ENCODE measurements at regions of chr5 and their contacts with region 1.

Region 1: GRCh38 chr5:132103332-132103951 is 29.9 kb downstream of the CSF2 start:
- DNase-seq: peak; percentile 82
- ATAC-seq: peak; percentile 57
- H3K4me3 Mint-ChIP-seq: peak overlapping the region; percentile 64
- H3K27ac Mint-ChIP-seq: peak overlapping the region; percentile 98
- H3K4me1 Mint-ChIP-seq: peaks cover 73% of the 10 kb centered on the region
- H3K27me3 Mint-ChIP-seq: no peaks in the 10 kb centered on the region

Region 2: GRCh38 chr5:131252824-131253171 is 850.6 kb before region 1 on chr5:
- CTCF ChIA-PET with region 1: no interaction called
- POLR2A ChIA-PET with region 1: no interaction called
- intact Hi-C with region 1: loop called in 1 of 2 experiments (anchors 5 kb)
- DNase-seq: peak; percentile 87
- ATAC-seq: peak; percentile 70
- H3K4me3 Mint-ChIP-seq: peak overlapping the region; percentile 84
- H3K27ac Mint-ChIP-seq: peak overlapping the region; percentile 98
- H3K4me1 Mint-ChIP-seq: peaks cover 69% of the 10 kb centered on the region
- H3K27me3 Mint-ChIP-seq: no peaks in the 10 kb centered on the region

Region 3: DNA sequence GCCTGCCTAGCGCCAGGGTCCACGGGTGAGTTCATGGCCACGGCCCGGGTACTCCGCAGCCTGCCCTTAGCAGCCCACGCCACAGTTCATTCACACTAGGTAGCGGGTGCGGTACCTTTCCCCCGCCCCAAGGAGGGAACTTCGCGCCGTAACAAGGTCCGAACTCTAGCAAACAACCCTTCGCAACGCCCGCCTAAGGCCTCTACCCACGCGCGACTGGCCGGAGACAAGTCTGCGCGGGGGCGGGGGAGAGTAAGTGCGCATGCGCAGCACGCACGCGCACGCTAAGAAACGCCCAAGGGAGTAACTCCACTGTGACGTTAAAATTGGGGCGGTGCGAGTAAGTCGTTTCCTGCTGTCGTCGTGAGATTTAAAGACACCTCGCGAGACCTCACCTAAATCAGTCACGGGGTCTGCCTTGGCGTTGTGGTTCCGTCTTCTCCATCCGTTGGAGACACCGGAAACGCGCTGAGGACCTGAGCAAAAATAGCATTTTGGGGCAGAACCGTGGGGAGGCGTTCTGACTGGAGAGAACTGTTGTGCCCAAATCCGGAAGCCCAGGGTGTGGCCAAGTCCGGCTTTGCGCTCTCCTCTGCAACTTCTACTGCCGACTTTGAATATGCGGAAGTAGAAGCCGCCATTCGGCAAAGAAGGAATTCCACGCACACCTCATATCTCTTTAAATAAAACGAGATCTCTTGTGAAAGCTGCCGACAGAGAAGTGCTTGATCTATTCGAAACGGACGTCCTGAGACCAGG is 468.3 kb before region 1 on chr5 and contains the start of gene RAPGEF6:
- CTCF ChIA-PET with region 1: no interaction called
- POLR2A ChIA-PET with region 1: no interaction called
- intact Hi-C with region 1: loop called in 1 of 2 experiments (anchors 2 kb)
- DNase-seq: peak; percentile 98
- ATAC-seq: peak; percentile 89
- H3K4me3 Mint-ChIP-seq: no peak within 1 kb of the TSS
- H3K27ac Mint-ChIP-seq: peak within 1 kb of the TSS; percentile 93
- H3K4me1 Mint-ChIP-seq: peaks cover 22% of the 10 kb centered on the region
- H3K27me3 Mint-ChIP-seq: no peaks in the 10 kb centered on the region
- total RNA-seq, gene RAPGEF6: 26.5 to 30.5 TPM

Region 4: DNA sequence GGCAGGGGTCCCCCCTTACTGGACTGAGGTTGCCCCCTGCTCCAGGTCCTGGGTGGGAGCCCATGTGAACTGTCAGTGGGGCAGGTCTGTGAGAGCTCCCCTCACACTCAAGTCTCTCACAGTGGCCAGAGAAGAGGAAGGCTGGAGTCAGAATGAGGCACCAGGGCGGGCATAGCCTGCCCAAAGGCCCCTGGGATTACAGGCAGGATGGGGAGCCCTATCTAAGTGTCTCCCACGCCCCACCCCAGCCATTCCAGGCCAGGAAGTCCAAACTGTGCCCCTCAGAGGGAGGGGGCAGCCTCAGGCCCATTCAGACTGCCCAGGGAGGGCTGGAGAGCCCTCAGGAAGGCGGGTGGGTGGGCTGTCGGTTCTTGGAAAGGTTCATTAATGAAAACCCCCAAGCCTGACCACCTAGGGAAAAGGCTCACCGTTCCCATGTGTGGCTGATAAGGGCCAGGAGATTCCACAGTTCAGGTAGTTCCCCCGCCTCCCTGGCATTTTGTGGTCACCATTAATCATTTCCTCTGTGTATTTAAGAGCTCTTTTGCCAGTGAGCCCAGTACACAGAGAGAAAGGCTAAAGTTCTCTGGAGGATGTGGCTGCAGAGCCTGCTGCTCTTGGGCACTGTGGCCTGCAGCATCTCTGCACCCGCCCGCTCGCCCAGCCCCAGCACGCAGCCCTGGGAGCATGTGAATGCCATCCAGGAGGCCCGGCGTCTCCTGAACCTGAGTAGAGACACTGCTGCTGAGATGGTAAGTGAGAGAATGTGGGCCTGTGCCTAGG is 30.0 kb before region 1 on chr5 and contains the start of gene CSF2:
- CTCF ChIA-PET with region 1: interaction called, 5 read pairs
- POLR2A ChIA-PET with region 1: interaction called, 3 read pairs
- intact Hi-C with region 1: loop called (anchors 1 kb)
- DNase-seq: peak; percentile 46
- ATAC-seq: peak; percentile 28
- H3K4me3 Mint-ChIP-seq: peak within 1 kb of the TSS; percentile 61
- H3K27ac Mint-ChIP-seq: peak within 1 kb of the TSS; percentile 33
- H3K4me1 Mint-ChIP-seq: peaks cover 43% of the 10 kb centered on the region
- H3K27me3 Mint-ChIP-seq: no peaks in the 10 kb centered on the region
- total RNA-seq, gene CSF2: 52.6 to 59.5 TPM

Region 5: DNA sequence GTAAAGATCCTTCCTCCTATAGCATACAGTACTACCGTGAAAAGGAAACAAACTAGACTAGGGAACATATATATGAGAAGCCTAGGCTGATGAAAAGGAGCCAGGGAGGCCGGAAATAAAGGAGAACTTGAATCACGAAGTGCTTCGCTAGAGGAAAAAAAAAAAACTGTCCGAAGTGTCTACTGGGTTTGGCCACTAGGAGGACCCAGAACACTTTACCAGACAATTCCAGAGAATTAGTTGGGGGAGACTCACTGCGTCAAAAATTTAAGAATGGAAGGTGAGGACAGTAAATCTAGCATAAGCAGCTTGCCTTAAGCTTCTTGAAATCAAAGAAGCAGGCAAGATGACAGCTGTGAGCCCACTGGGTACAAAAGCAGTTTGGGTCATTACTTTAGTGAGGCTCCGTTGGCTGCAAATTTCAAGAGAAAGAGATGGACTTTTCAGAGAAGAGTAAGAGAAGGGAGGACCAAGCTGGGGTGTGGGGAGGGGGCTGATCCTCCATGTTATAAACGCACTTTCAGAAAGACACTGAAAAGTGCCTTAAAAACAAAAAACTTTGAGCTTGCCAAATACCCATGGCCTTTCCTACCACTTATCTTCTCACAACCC is 76.8 kb after region 1 on chr5:
- CTCF ChIA-PET with region 1: interaction called, 8 read pairs
- POLR2A ChIA-PET with region 1: no interaction called
- intact Hi-C with region 1: loop called (anchors 1 kb)
- DNase-seq: peak; percentile 19
- ATAC-seq: peak; percentile 38
- H3K4me3 Mint-ChIP-seq: no peak overlapping the region
- H3K27ac Mint-ChIP-seq: peak overlapping the region; percentile 73
- H3K4me1 Mint-ChIP-seq: peaks cover 36% of the 10 kb centered on the region
- H3K27me3 Mint-ChIP-seq: no peaks in the 10 kb centered on the region

Region 6: DNA sequence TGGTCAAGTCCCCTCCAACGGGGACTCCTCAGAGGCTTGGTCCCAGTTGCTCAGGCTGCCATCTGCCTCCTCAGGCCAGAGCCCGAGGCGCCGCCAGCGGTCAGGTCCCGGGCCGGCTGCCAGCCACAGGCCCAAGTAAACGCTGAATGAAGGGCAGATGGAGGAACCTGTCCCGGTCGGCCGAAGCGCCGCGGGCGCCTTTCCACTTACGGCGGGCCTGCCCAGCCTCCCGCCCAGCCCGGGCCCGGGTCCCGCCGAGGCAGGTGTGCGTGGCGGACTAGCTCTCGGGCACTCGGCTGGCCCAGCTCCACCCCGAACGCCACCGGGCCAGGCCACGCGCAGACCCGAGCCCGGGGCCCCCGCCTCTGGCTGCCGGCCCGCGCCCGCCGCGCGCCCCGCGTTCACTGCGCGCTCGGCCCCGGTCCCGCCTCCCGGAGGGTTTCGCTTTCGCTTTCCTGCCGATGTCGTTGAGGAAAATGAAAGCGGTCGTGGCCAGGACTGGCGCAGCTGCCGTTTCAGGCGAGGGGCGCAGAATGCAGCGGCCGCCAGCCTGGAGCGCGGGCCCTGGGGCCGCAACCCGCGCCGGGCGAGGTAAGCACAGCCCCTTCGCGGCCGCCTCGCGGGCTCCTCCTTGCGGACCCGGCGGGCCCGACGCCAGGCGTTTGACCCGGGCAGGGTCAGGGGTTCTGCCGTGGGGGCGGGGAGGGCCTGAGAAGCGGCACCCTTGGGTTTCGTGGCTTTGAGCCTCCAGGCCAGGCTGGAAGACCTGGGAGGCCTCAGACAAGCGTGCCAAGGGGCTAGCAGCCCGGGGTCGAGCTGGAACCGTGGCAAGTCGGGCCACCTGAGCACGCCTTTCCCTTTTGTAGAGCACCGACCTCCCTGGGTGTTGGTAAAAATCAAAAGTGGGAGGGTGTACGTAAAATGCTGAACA is 307.3 kb after region 1 on chr5:
- CTCF ChIA-PET with region 1: no interaction called
- POLR2A ChIA-PET with region 1: no interaction called
- intact Hi-C with region 1: loop called in 1 of 2 experiments (anchors 2 kb)
- DNase-seq: peak; percentile 92
- ATAC-seq: peak; percentile 68
- H3K4me3 Mint-ChIP-seq: peak overlapping the region; percentile 83
- H3K27ac Mint-ChIP-seq: peak overlapping the region; percentile 98
- H3K4me1 Mint-ChIP-seq: peaks cover 71% of the 10 kb centered on the region
- H3K27me3 Mint-ChIP-seq: no peaks in the 10 kb centered on the region

Region 7: DNA sequence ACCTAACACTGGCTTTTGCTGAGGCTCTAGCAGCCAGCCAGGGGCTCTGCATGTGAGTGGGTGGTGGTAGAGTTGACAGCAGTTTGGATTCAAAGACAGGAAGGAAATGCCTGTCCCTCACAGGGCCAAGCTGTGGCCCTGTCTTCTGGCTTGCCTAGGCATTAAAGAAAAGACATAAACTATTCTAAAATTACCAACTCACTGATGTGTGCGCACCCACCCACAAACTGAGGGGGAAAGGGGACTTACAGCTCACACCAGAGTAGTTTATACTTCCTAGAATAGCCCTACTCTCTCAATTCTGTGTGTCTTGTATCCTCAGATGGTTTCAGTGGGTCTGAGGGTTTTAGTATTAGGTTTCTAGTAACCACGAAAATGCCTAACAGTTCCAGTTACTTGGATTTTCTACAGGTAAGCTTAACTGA is 536.3 kb after region 1 on chr5:
- CTCF ChIA-PET with region 1: no interaction called
- POLR2A ChIA-PET with region 1: no interaction called
- intact Hi-C with region 1: loop called in 1 of 2 experiments (anchors 2 kb)
- DNase-seq: peak; percentile 44
- ATAC-seq: peak; percentile 3
- H3K4me3 Mint-ChIP-seq: no peak overlapping the region
- H3K27ac Mint-ChIP-seq: no peak overlapping the region
- H3K4me1 Mint-ChIP-seq: peaks cover 71% of the 10 kb centered on the region
- H3K27me3 Mint-ChIP-seq: no peaks in the 10 kb centered on the region